ENCODE measurements at regions of chr1 and their contacts with region 1.

Region 1: DNA sequence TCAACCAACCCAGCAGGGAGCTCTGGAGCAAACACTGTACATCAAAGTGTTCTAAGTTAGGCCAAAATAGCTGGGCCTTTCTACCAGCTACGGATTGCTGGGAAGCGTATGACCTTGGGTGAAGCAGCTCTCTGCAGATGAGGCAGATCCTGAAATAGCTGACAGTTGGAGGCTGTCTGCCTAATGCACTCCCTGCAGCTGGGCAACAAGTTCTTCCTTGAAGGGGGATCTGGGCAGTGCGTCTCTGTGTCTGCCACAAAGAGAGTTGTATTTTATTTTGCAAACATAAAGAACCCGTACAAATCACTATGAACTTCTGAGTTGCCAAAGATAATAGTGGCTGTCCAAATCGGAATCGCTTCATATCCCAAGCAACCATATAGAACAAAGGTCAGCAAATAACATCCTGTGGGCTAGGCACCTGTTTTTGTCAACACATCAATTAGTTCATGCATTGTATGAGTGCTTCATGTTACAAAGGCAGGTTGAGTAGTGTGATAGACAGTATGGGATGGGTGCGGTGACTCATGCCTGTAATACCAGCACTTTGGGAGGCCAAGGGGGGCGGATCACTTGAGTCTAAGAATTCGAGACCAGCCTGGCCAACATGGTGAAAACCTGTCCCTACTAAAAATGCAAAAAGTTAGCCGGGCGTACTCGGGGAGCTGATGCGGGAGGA is 29.1 kb upstream of the KLF17 start:
- DNase-seq: peak; percentile 56
- ATAC-seq: peak; percentile 86
- H3K4me3 ChIP-seq: no peak overlapping the region
- H3K27ac ChIP-seq: no peak overlapping the region
- H3K4me1 ChIP-seq: peaks cover 14% of the 10 kb centered on the region
- H3K27me3 ChIP-seq: no peaks in the 10 kb centered on the region
- CTCF ChIP-seq: no peak

Region 2: DNA sequence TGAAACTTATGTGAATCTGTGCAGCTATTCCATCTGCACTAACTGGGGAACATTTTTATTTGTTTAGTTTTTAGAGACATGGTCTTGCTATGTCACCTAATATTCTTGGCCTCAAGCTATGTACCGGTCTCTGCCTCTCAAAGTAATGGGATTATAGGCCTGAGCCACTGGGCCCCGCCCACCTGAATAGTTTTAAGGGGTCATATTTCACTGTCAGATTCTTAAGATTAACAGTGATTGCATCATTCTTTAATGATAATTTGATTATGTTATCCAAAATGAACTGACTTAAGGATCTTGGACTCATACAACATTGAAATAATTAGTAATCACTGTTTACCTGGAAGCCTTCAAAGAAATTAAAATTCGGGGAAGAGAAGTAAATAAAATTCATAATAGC is 64.5 kb after region 1 on chr1:
- CTCF ChIA-PET with region 1: no interaction called
- POLR2A ChIA-PET with region 1: no interaction called
- intact Hi-C with region 1: loop called (anchors 10 kb)
- DNase-seq: peak; percentile 44
- ATAC-seq: peak; percentile 49
- H3K4me3 ChIP-seq: no peak overlapping the region
- H3K27ac ChIP-seq: peak overlapping the region; percentile 84
- H3K4me1 ChIP-seq: peaks cover 25% of the 10 kb centered on the region
- H3K27me3 ChIP-seq: no peaks in the 10 kb centered on the region
- CTCF ChIP-seq: no peak

Region 3: DNA sequence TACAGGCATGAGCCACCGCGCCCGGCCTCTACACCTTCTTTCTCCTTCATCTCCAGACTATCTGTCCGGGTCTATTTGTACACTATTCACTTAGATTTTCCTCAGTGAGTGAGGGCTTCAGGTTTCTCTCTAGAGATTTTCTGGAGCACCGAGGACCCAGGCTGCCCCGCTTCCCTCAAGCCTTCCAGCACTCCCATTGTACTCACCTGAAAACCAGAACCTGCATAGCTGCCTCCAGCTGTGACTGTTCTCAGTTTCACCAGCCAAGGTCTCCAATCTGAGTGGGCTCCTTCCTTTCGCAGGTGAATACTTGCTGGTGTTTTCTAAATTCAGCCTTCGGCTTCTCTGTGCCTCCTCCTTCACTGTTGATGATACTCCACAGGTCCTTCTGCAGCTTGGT is 110.8 kb after region 1 on chr1:
- CTCF ChIA-PET with region 1: interaction called, 3 read pairs
- POLR2A ChIA-PET with region 1: no interaction called
- intact Hi-C with region 1: loop called (anchors 5 kb)
- DNase-seq: no peak
- ATAC-seq: no peak
- H3K4me3 ChIP-seq: no peak overlapping the region
- H3K27ac ChIP-seq: no peak overlapping the region
- H3K4me1 ChIP-seq: no peaks in the 10 kb centered on the region
- H3K27me3 ChIP-seq: no peaks in the 10 kb centered on the region
- CTCF ChIP-seq: no peak